Common myeloid progenitor, CD34-positive (primary cell): ENCODE measurements at regions of chr22 and their contacts with region 1.

Region 1: DNA sequence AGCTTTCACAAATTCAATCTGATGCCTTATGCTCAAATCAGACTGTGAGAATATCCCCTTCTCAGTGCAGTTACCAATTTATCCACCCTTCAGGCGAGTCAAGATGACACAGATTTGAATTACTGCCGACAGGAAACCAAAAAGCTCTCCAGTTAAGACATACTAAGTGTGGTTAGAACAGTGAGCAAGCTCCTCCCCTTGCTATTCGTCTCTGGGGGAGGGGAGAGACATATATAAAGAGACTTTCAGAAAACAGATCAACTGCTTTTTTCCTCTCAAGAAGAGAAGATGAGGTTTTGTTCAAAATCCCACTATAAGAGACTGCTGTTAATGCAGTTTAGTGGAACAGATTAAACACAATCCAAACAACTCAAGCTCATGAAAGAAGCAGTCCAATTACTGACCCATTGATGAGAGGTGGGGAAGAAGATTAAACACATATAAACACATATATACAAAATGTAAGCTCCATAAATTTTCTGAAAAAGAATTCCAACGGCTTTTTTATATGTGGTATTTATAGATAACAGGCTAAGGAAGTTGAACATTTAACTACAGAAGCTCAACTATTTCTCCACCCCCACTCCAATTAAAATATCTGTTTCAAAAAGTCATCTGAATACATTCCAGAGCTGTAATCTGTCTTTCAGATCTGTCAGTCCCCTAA is 102.7 kb downstream of the MRTFA start:
- DNase-seq: peak; percentile 72 to 94 (median 91)
- H3K4me3 ChIP-seq: peak overlapping the region in 6 of 7 experiments; percentile 4 to 56 (median 46)
- H3K27ac ChIP-seq: peak overlapping the region in 1 of 2 experiments; percentile 15
- H3K4me1 ChIP-seq: peaks cover 37 to 45% (median 41%) of the 10 kb centered on the region in 4 experiments
- H3K27me3 ChIP-seq: no peaks in the 10 kb centered on the region

Region 2: GRCh38 chr22:40238425-40239344 is 295.2 kb before region 1 on chr22:
- CTCF ChIA-PET with region 1: no interaction called
- POLR2A ChIA-PET with region 1: no interaction called
- DNase-seq: no peak
- H3K4me3 ChIP-seq: no peak overlapping the region
- H3K27ac ChIP-seq: no peak overlapping the region
- H3K4me1 ChIP-seq: peaks cover 0 to 14% (median 6%) of the 10 kb centered on the region in 4 experiments
- H3K27me3 ChIP-seq: no peaks in the 10 kb centered on the region

Region 3: GRCh38 chr22:40334899-40335298 is 198.9 kb before region 1 on chr22:
- CTCF ChIA-PET with region 1: no interaction called
- POLR2A ChIA-PET with region 1: no interaction called
- DNase-seq: peak in 1 of 3 donors; percentile 32
- H3K4me3 ChIP-seq: no peak overlapping the region
- H3K27ac ChIP-seq: no peak overlapping the region
- H3K4me1 ChIP-seq: peaks cover 6 to 41% (median 24%) of the 10 kb centered on the region in 4 experiments
- H3K27me3 ChIP-seq: no peaks in the 10 kb centered on the region

Region 4: GRCh38 chr22:40426594-40427333 is 107.1 kb before region 1 on chr22:
- CTCF ChIA-PET with region 1: no interaction called
- POLR2A ChIA-PET with region 1: no interaction called
- DNase-seq: no peak
- H3K4me3 ChIP-seq: no peak overlapping the region
- H3K27ac ChIP-seq: peak overlapping the region in 1 of 2 experiments; percentile 18
- H3K4me1 ChIP-seq: peaks cover 0 to 15% (median 3%) of the 10 kb centered on the region in 4 experiments
- H3K27me3 ChIP-seq: no peaks in the 10 kb centered on the region

Region 5: GRCh38 chr22:40509401-40510134 is 24.3 kb before region 1 on chr22:
- CTCF ChIA-PET with region 1: no interaction called
- POLR2A ChIA-PET with region 1: no interaction called
- DNase-seq: peak; percentile 76 to 80 (median 80)
- H3K4me3 ChIP-seq: peak overlapping the region in 1 of 7 experiments; percentile 13
- H3K27ac ChIP-seq: peak overlapping the region in 1 of 2 experiments; percentile 73
- H3K4me1 ChIP-seq: peaks cover 13 to 23% (median 23%) of the 10 kb centered on the region in 4 experiments
- H3K27me3 ChIP-seq: no peaks in the 10 kb centered on the region

Region 6: DNA sequence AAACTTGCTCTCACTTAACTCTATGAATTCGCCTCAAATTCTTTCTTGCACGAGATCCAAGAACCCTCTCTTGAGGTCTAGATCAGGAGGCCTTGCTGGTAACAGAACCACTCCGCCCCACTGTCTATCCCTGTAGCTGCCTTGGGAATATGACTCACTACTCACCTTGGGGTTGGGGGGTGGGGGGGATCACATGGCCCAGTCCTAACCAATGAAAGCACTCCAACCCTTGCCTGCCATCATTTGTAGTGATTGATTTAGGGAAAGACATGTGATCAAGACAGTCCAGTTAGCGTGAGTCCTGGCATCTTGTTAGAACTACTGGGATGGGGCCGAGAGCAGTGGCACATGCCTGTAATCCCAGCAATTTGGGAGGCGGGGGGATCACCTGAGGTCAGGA is 107.4 kb after region 1 on chr22:
- CTCF ChIA-PET with region 1: interaction called, 50 read pairs
- POLR2A ChIA-PET with region 1: interaction called, 3 read pairs
- DNase-seq: no peak
- H3K4me3 ChIP-seq: no peak overlapping the region
- H3K27ac ChIP-seq: no peak overlapping the region
- H3K4me1 ChIP-seq: peaks cover 0 to 18% (median 12%) of the 10 kb centered on the region in 4 experiments
- H3K27me3 ChIP-seq: no peaks in the 10 kb centered on the region